Activated CD4-positive, alpha-beta T cell treated with anti-CD3 and anti-CD28 coated beads, Interleukin-2, amount 10 ng/mL, durations not matched to agents 7 days and 5 days (primary cell): ENCODE measurements at regions of chr22 and their contacts with region 1.

Region 1: GRCh38 chr22:37019309-37020125 is at the starts of genes MPST and TST:
- DNase-seq: peak; percentile 50
- H3K4me3 Mint-ChIP-seq: peak within 1 kb of the TSS; percentile 86
- H3K27ac Mint-ChIP-seq: peak within 1 kb of the TSS; percentile 86
- H3K4me1 Mint-ChIP-seq: peaks cover 16% of the 10 kb centered on the region
- H3K27me3 Mint-ChIP-seq: peaks cover 4% of the 10 kb centered on the region
- total RNA-seq, gene MPST: 15.6 to 18.8 TPM
- total RNA-seq, gene TST: 2.4 to 3.4 TPM

Region 2: DNA sequence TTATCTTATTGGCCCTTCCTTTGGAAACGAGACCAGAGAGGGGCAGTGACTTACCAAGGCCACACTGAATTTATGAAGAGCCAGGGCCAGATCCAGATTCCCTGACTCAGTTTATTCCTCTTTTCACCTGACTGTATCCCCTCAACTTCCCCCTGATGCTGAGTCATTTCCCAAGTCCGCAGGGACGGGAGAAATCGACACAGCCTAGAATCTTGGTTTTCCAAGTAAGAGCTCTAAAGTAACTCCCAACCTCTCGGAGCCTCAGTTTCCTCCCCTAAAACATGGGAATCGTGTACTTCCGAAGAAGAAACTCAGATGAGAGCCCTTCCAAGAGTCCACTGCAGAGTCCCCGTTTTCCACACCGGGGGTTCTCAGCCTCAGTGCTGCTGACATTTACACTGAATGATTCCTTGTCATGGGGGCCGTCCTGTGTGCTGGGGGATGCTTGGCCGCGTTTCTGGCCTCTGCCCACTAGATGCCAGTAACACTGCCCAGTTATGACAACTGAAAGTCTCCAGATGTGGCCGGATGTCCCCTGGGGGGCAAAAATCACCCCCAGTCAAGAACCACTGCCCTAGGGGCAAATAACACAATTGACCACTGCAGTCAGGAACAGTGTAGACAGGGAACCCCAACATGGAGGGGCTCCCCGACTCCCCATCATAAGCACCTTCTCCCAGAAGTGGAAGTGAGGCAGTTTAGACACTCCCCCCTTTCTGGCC is 11.2 kb after region 1 on chr22:
- CTCF ChIA-PET with region 1: interaction called, 10 read pairs
- POLR2A ChIA-PET with region 1: interaction called, 3 read pairs
- DNase-seq: no peak
- H3K4me3 Mint-ChIP-seq: no peak overlapping the region
- H3K27ac Mint-ChIP-seq: no peak overlapping the region
- H3K4me1 Mint-ChIP-seq: no peaks in the 10 kb centered on the region
- H3K27me3 Mint-ChIP-seq: no peaks in the 10 kb centered on the region

Region 3: DNA sequence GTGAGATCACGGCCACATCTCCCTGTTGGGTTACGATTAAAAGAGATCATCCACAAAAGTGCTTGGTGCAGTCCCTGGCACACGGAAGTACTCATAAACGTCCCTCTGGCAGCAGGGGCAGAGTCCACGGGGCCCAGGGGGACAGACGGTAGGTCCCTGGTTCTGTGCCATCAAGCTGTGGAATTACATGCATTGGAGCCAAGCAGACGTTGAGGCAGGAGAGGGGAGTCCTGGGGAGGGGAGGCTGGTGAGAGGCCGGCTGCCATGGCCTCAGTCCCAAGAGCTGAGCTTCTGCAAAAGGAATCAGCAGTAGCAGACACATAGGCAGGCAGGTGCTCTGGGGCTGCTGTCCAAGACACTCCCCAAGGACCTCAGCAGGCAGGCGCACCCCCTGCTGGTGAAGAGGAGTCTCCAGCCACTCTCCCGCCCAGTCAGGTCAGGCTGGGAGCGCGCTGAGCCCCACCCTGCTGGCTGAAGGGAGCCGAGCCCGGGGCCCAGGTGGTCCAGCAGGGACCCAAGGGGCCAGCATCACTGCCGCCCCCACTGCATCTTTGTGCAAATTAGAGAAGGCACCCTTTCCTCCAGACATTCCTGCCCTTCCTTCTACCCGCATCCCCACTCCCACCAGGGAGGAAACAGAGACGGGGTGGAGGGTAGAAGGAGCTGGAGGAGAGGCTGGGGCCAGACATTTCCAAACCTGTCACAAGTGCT is 24.5 kb after region 1 on chr22:
- CTCF ChIA-PET with region 1: interaction called, 12 read pairs
- POLR2A ChIA-PET with region 1: no interaction called
- DNase-seq: peak; percentile 49
- H3K4me3 Mint-ChIP-seq: no peak overlapping the region
- H3K27ac Mint-ChIP-seq: no peak overlapping the region
- H3K4me1 Mint-ChIP-seq: peaks cover 25% of the 10 kb centered on the region
- H3K27me3 Mint-ChIP-seq: peaks cover 7% of the 10 kb centered on the region

Region 4: GRCh38 chr22:37290737-37291136 is 271.2 kb after region 1 on chr22:
- CTCF ChIA-PET with region 1: no interaction called
- POLR2A ChIA-PET with region 1: no interaction called
- DNase-seq: no peak
- H3K4me3 Mint-ChIP-seq: no peak overlapping the region
- H3K27ac Mint-ChIP-seq: peak overlapping the region; percentile 9
- H3K4me1 Mint-ChIP-seq: peaks cover 84% of the 10 kb centered on the region
- H3K27me3 Mint-ChIP-seq: no peaks in the 10 kb centered on the region